ENCODE measurements at regions of chr12 and their contacts with region 1.

Region 1: GRCh38 chr12:69570545-69571399 is 14.5 kb upstream of the CCT2 start:
- DNase-seq: peak; percentile 65 to 73
- H3K4me3 ChIP-seq: no peak overlapping the region
- H3K4me3 Mint-ChIP-seq: no peak overlapping the region
- H3K27ac Mint-ChIP-seq: no peak overlapping the region
- H3K4me1 ChIP-seq: peaks cover 13% of the 10 kb centered on the region
- H3K4me1 Mint-ChIP-seq: peaks cover 27% of the 10 kb centered on the region
- H3K27me3 ChIP-seq: no peaks in the 10 kb centered on the region
- H3K27me3 Mint-ChIP-seq: no peaks in the 10 kb centered on the region
- CTCF ChIP-seq: peak; percentile 77 to 83

Region 2: DNA sequence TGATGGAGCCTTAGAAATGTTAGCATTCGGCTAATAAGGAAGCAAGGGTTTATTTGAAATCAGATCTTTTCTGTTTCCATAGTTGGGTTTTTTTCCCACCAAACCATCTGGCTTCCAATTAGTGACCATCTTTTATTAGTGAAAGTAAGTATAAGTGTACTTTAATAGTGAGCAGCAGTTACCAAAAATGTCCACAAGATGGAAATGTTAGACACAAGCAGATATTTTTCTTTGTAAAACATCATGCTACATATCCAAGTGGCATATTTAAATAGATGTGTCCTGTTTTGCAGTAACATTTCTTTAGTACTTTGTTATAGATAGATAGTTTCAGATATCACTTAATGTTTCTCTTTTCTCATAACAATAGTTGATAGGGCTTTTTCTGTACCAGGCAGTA is 182.4 kb before region 1 on chr12:
- CTCF ChIA-PET with region 1: interaction called, 4 read pairs
- POLR2A ChIA-PET with region 1: no interaction called
- intact Hi-C with region 1: loop called (anchors 1 kb)
- DNase-seq: peak in 1 of 2 experiments; percentile 50
- H3K4me3 ChIP-seq: no peak overlapping the region
- H3K4me3 Mint-ChIP-seq: no peak overlapping the region
- H3K27ac Mint-ChIP-seq: no peak overlapping the region
- H3K4me1 ChIP-seq: peaks cover 34% of the 10 kb centered on the region
- H3K4me1 Mint-ChIP-seq: peaks cover 15% of the 10 kb centered on the region
- H3K27me3 ChIP-seq: no peaks in the 10 kb centered on the region
- H3K27me3 Mint-ChIP-seq: no peaks in the 10 kb centered on the region
- CTCF ChIP-seq: peak; percentile 43 to 70

Region 3: DNA sequence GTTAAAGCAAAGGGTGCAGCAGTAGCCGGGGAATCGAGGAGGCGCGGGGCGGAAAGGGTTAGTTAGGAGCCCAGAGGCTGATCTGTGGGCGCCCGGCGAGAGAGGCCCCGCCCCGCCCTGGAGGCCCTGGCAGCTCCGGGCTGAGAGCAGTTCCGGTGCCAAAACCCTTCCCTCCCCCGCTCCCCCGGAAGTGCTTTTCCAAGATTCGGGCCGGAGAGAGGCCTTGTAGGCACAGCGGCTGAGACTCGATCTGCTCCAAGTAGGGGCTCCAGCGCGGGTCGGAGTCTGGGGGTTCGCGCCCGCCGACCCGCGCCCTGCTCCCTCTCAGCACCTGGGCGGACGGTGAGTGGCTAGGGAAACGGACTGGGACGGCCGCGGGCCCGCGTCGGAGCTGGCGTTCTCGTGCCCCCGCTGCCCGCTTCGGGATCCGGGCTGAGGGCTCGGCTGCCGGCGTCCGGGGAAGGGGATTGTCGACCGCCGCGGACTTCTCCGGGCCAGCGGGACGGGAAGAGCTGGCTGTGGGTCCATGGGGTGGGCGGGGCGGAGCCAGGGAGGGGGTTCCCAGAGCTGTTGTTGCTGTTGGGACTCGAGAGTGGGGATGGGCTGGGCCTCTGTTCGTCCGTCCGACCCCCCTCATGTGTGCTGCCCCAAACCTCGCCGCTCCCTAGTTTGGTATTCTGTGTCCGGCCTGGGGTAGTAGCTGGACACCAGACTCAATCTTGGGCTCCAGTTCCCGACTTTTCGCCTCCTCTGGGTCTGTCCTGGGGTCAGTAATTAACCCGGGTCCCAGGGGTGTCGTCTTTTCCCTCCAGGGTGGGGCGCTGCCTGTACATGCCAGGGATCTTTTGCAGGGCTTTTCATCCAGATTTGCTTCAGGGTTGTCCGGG is 100.3 kb before region 1 on chr12 and contains the start of gene FRS2:
- CTCF ChIA-PET with region 1: interaction called, 4 read pairs
- POLR2A ChIA-PET with region 1: no interaction called
- intact Hi-C with region 1: loop called (anchors 2 kb)
- DNase-seq: peak; percentile 95
- H3K4me3 ChIP-seq: peak within 1 kb of the TSS; percentile 59
- H3K4me3 Mint-ChIP-seq: peak within 1 kb of the TSS; percentile 86
- H3K27ac Mint-ChIP-seq: peak within 1 kb of the TSS; percentile 95
- H3K4me1 ChIP-seq: peaks cover 41% of the 10 kb centered on the region
- H3K4me1 Mint-ChIP-seq: peaks cover 67% of the 10 kb centered on the region
- H3K27me3 ChIP-seq: no peaks in the 10 kb centered on the region
- H3K27me3 Mint-ChIP-seq: no peaks in the 10 kb centered on the region
- CTCF ChIP-seq: peak; percentile 16 to 37
- total RNA-seq, gene FRS2: 82.3 and 86.5 TPM in 2 replicates

Region 4: DNA sequence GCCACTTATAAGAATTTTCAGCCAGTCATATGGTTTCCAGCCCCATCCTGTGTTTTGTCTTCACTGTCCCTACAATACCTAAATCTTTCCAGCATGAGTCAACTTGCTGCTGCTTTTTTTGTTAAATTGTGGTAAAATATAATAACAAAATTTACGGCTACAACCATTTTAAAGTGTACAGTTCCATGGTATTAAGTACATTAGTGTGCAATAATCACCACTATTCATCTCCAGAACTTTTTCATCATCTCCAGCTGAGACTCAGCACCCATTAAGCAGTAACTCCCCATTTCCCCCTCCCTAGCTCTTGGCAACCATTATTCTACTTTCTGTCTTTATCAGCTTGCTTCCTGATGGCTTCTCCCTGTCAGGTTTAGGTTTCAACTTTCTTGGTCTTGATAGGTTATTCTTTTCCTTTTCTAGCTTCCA is 61.5 kb before region 1 on chr12:
- CTCF ChIA-PET with region 1: no interaction called
- POLR2A ChIA-PET with region 1: no interaction called
- intact Hi-C with region 1: no loop called
- DNase-seq: no peak
- H3K4me3 ChIP-seq: no peak overlapping the region
- H3K4me3 Mint-ChIP-seq: no peak overlapping the region
- H3K27ac Mint-ChIP-seq: no peak overlapping the region
- H3K4me1 ChIP-seq: peaks cover 14% of the 10 kb centered on the region
- H3K4me1 Mint-ChIP-seq: peaks cover 29% of the 10 kb centered on the region
- H3K27me3 ChIP-seq: no peaks in the 10 kb centered on the region
- H3K27me3 Mint-ChIP-seq: no peaks in the 10 kb centered on the region
- CTCF ChIP-seq: no peak

Region 5: DNA sequence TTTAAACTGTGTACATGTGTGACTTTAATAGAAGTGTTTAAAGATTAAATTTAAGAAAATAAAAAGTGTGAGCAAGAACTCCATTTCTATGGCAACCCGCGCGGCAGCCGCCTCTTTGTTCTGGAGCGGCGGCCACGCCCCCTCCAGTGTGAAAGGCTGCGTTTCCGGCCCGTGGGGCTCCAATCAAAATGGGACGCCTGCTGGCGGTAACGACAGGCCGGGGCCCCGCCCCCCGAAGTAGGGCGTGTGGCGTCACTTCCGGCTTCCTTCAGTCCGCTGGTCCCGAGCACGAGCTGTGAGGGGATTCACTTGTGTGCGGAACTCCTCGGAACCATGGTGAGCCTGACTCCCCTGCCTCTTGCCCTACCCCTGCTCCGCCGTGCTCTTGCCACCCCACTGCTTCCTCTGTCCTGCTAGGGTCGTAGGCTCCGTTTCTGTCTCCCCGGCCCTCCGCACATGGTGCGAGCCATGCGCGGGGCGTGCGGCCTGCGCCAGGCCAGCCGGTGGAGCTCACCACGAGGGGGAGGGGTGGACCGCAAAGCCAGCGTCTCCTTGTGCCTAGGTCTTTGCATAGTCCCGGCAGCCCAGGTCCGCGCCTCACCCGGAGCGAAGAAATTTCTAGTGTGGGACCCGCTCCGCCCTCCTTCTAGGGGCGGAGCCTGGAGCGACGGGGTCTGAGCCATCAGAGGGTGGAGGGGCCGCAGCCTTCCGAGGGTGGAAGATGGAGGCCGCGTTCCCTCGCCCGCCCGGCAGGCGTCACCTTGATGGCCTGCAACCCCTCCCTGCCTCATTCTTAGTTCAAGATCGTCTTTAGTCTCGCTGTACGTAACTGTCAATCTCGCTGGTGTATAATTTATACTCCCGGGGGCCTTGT is 14.7 kb after region 1 on chr12 and contains the start of gene CCT2:
- CTCF ChIA-PET with region 1: interaction called, 12 read pairs
- POLR2A ChIA-PET with region 1: no interaction called
- intact Hi-C with region 1: no loop called
- DNase-seq: peak; percentile 96 to 98
- H3K4me3 ChIP-seq: peak within 1 kb of the TSS; percentile 97
- H3K4me3 Mint-ChIP-seq: peak within 1 kb of the TSS; percentile 97
- H3K27ac Mint-ChIP-seq: peak within 1 kb of the TSS; percentile 96
- H3K4me1 ChIP-seq: no peaks in the 10 kb centered on the region
- H3K4me1 Mint-ChIP-seq: peaks cover 5% of the 10 kb centered on the region
- H3K27me3 ChIP-seq: no peaks in the 10 kb centered on the region
- H3K27me3 Mint-ChIP-seq: no peaks in the 10 kb centered on the region
- CTCF ChIP-seq: peak; percentile 31 to 48
- total RNA-seq, gene CCT2: 321 and 341 TPM in 2 replicates